ENCODE measurements at regions of chr11 and their contacts with region 1.

Region 1: GRCh38 chr11:95545116-95545875 is 244.3 kb downstream of the FAM76B start:
- DNase-seq: no peak
- ATAC-seq: no peak
- H3K4me3 ChIP-seq: no peak overlapping the region
- H3K4me3 Mint-ChIP-seq: no peak overlapping the region
- H3K27ac ChIP-seq: no peak overlapping the region
- H3K27ac Mint-ChIP-seq: no peak overlapping the region
- H3K4me1 ChIP-seq: no peaks in the 10 kb centered on the region
- H3K4me1 Mint-ChIP-seq: no peaks in the 10 kb centered on the region
- H3K27me3 ChIP-seq: no peaks in the 10 kb centered on the region
- H3K27me3 Mint-ChIP-seq: no peaks in the 10 kb centered on the region
- CTCF ChIP-seq: no peak

Region 2: DNA sequence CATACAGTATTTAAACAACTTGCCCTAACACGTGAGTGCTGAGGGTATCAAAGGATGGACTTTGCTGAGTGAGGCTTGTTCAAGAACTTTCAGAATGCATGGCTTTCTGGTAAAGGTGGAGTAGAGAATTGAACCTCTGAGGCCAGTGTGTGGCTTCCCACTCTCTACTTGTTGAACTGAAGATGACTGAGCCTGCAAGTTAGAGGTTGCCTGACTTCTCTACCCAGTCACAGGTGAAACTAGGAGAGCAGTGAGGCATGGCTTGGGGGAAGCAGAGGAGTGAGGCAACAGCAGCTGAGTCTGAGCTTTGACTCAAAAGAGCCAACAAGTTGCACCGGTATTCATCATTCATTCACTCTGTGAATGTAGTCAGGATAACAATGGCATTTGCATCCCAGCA is 57.9 kb before region 1 on chr11:
- CTCF ChIA-PET with region 1: no interaction called
- POLR2A ChIA-PET with region 1: no interaction called
- intact Hi-C with region 1: loop called (anchors 10 kb)
- DNase-seq: peak; percentile 59
- ATAC-seq: peak; percentile 100
- H3K4me3 ChIP-seq: no peak overlapping the region
- H3K4me3 Mint-ChIP-seq: no peak overlapping the region
- H3K27ac ChIP-seq: no peak overlapping the region
- H3K27ac Mint-ChIP-seq: peak overlapping the region; percentile 50
- H3K4me1 ChIP-seq: peaks cover 8 to 9% of the 10 kb centered on the region in 2 donors
- H3K4me1 Mint-ChIP-seq: peaks cover 13% of the 10 kb centered on the region
- H3K27me3 ChIP-seq: no peaks in the 10 kb centered on the region
- H3K27me3 Mint-ChIP-seq: no peaks in the 10 kb centered on the region
- CTCF ChIP-seq: no peak

Region 3: GRCh38 chr11:95531116-95531515 is 14.2 kb before region 1 on chr11:
- CTCF ChIA-PET with region 1: no interaction called
- POLR2A ChIA-PET with region 1: no interaction called
- intact Hi-C with region 1: no loop called
- DNase-seq: no peak
- ATAC-seq: no peak
- H3K4me3 ChIP-seq: no peak overlapping the region
- H3K4me3 Mint-ChIP-seq: no peak overlapping the region
- H3K27ac ChIP-seq: no peak overlapping the region
- H3K27ac Mint-ChIP-seq: no peak overlapping the region
- H3K4me1 ChIP-seq: no peaks in the 10 kb centered on the region
- H3K4me1 Mint-ChIP-seq: no peaks in the 10 kb centered on the region
- H3K27me3 ChIP-seq: no peaks in the 10 kb centered on the region
- H3K27me3 Mint-ChIP-seq: peaks cover 3% of the 10 kb centered on the region
- CTCF ChIP-seq: no peak

Region 4: GRCh38 chr11:95563173-95563572 is 17.9 kb after region 1 on chr11:
- CTCF ChIA-PET with region 1: no interaction called
- POLR2A ChIA-PET with region 1: no interaction called
- intact Hi-C with region 1: no loop called
- DNase-seq: no peak
- ATAC-seq: no peak
- H3K4me3 ChIP-seq: no peak overlapping the region
- H3K4me3 Mint-ChIP-seq: no peak overlapping the region
- H3K27ac ChIP-seq: no peak overlapping the region
- H3K27ac Mint-ChIP-seq: no peak overlapping the region
- H3K4me1 ChIP-seq: no peaks in the 10 kb centered on the region
- H3K4me1 Mint-ChIP-seq: no peaks in the 10 kb centered on the region
- H3K27me3 ChIP-seq: no peaks in the 10 kb centered on the region
- H3K27me3 Mint-ChIP-seq: no peaks in the 10 kb centered on the region
- CTCF ChIP-seq: no peak